Panc1 (cell line): ENCODE measurements at regions of chr9 and their contacts with region 1.

Region 1: GRCh38 chr9:131046581-131047202 is 37.7 kb downstream of the LAMC3 start:
- DNase-seq: no peak
- ATAC-seq: peak; percentile 91
- H3K4me3 ChIP-seq: no peak overlapping the region
- H3K27ac ChIP-seq: no peak overlapping the region
- H3K4me1 ChIP-seq: no peaks in the 10 kb centered on the region
- H3K27me3 ChIP-seq: no peaks in the 10 kb centered on the region
- CTCF ChIP-seq: peak; percentile 92

Region 2: DNA sequence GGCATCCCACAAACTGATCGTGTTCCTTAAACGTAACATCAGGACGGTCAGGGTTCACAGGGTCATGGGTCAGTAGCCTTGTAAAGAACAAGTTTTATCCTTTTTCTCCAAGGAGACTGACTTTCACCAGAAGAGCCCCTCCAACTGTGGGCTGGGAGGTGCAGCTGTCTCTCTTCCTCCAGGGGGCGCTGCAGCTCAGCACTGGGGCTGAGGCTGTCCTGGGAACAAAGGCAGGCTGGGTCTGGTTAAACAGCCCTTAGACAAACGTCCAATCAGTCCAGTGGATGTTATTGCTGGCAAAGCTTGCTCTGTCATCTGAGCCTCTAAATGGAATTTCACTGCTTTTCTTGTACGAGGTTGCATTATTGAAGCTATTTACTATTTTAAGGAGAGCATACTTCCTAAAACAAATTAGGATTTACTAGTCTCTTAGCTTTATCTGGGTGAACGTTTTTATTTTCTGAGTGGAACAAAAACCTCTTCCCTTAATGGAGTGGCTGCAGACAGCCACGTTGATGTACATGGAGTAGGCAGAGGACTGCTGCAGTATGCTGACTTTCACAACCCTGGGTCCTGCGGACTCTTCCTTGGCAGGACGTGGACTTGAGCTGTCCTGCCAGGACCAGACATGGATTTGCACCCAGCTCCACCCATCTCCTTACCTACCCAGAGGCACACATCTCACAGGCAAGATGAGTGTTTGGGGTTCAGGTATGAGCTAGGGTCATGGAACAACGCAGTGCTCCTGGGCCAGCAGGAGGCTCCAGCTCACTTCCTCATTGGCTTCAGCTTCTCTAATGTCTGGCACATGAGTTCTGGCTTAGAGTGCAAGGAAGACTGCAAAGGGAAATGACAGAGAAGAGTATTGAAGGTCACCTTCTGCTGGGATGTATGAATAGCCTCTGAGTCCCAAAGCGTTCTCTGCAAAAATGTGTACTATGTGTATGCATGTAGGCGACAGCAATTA is 345.4 kb before region 1 on chr9:
- CTCF ChIA-PET with region 1: no interaction called
- POLR2A ChIA-PET with region 1: interaction called, 16 read pairs
- in situ Hi-C with region 1: no loop called
- intact Hi-C with region 1: no loop called
- DNase-seq: no peak
- ATAC-seq: peak; percentile 93
- H3K4me3 ChIP-seq: no peak overlapping the region
- H3K27ac ChIP-seq: no peak overlapping the region
- H3K4me1 ChIP-seq: no peaks in the 10 kb centered on the region; the same call in 1 of the 2 replicates
- H3K27me3 ChIP-seq: no peaks in the 10 kb centered on the region
- CTCF ChIP-seq: peak; percentile 91

Region 3: DNA sequence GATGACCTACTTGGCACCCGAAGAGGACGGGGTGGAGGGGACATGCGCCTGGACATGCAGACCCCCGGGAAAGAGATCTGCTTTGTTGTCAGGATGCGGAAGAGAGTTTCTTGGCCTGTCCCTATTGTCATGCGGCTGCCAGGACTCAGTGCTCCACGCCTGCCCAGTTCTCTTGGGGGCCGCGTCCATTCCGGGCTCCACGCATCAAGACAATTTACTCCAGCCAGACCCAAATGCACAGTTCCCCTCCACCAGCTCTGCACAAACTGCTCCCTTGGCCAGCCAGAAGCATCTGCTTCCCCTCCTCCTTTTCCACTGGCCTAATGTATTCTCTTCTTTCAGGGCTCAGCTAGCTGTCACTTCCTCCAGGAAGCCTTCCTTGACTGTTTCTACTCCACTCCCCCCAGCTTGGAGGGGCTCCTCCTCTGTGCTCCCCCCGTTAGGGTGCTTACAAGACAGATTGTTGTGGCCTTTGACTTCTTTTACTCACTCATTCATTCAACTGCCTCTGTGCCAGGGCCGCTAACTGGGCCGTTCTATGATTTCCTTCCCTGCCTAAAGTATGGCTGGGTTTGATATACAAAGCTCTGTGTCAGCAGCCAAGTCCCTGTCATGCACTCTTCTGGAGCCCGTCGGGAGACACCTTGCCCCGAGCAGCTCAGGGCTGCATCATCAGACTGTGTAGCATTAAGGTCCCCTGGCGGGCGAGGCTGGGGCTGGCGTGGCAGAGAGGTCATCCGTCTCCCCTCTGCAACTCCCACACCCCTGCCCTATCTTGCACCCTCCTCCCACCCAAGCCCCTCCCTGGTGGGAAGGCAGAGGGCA is 114.2 kb before region 1 on chr9:
- CTCF ChIA-PET with region 1: no interaction called
- POLR2A ChIA-PET with region 1: interaction called, 13 read pairs
- in situ Hi-C with region 1: no loop called
- intact Hi-C with region 1: no loop called
- DNase-seq: no peak
- ATAC-seq: peak; percentile 36; the same call in 1 of the 2 replicates
- H3K4me3 ChIP-seq: no peak overlapping the region
- H3K27ac ChIP-seq: no peak overlapping the region
- H3K4me1 ChIP-seq: peaks cover 36% of the 10 kb centered on the region
- H3K27me3 ChIP-seq: no peaks in the 10 kb centered on the region
- CTCF ChIP-seq: no peak

Region 4: GRCh38 chr9:130973169-130973936 is 73.3 kb before region 1 on chr9:
- CTCF ChIA-PET with region 1: interaction called, 22 read pairs
- POLR2A ChIA-PET with region 1: no interaction called
- in situ Hi-C with region 1: no loop called
- intact Hi-C with region 1: no loop called
- DNase-seq: no peak
- ATAC-seq: peak; percentile 42
- H3K4me3 ChIP-seq: no peak overlapping the region
- H3K27ac ChIP-seq: no peak overlapping the region
- H3K4me1 ChIP-seq: no peaks in the 10 kb centered on the region
- H3K27me3 ChIP-seq: no peaks in the 10 kb centered on the region
- CTCF ChIP-seq: no peak

Region 5: DNA sequence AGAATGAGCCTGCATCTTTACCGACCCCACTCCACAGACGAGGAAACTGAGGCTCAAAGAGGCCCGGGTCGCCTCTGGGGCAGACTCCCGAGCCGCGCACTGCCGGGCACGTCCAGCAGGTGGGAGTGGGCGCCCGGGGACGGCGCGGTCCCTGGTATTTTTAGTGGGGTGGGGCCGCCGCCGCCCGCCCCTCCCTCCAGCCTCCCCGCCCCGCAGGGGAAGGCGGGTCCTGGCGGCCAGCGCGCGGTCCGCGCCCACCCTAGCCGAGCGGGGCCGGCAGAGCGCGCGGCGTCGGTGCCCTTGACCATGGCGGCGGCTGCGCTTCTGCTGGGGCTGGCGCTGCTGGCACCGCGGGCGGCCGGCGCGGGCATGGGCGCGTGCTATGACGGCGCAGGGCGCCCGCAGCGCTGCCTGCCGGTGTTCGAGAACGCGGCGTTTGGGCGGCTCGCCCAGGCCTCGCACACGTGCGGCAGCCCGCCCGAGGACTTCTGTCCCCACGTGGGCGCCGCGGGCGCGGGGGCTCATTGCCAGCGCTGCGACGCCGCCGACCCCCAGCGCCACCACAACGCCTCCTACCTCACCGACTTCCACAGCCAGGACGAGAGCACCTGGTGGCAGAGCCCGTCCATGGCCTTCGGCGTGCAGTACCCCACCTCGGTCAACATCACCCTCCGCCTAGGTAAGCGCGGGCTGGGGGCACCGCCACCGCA is 37.6 kb before region 1 on chr9 and contains the start of gene LAMC3:
- CTCF ChIA-PET with region 1: interaction called, 8 read pairs
- POLR2A ChIA-PET with region 1: no interaction called
- in situ Hi-C with region 1: no loop called
- intact Hi-C with region 1: loop called (anchors 1 kb)
- DNase-seq: no peak
- ATAC-seq: peak; percentile 92
- H3K4me3 ChIP-seq: peak within 1 kb of the TSS; percentile 46 to 56
- H3K27ac ChIP-seq: no peak within 1 kb of the TSS
- H3K4me1 ChIP-seq: no peaks in the 10 kb centered on the region
- H3K27me3 ChIP-seq: no peaks in the 10 kb centered on the region
- CTCF ChIP-seq: peak; percentile 78
- total RNA-seq, gene LAMC3: 16.4 TPM

Region 6: GRCh38 chr9:131082774-131083512 is 36.3 kb after region 1 on chr9:
- CTCF ChIA-PET with region 1: no interaction called
- POLR2A ChIA-PET with region 1: no interaction called
- in situ Hi-C with region 1: no loop called
- intact Hi-C with region 1: no loop called
- DNase-seq: no peak
- ATAC-seq: no peak
- H3K4me3 ChIP-seq: no peak overlapping the region
- H3K27ac ChIP-seq: no peak overlapping the region
- H3K4me1 ChIP-seq: peaks cover 4% of the 10 kb centered on the region
- H3K27me3 ChIP-seq: no peaks in the 10 kb centered on the region
- CTCF ChIP-seq: no peak

Region 7: GRCh38 chr9:131385296-131385695 is 338.6 kb after region 1 on chr9:
- CTCF ChIA-PET with region 1: interaction called, 10 read pairs
- POLR2A ChIA-PET with region 1: no interaction called
- in situ Hi-C with region 1: no loop called
- intact Hi-C with region 1: no loop called
- DNase-seq: no peak
- ATAC-seq: no peak
- H3K4me3 ChIP-seq: no peak overlapping the region
- H3K27ac ChIP-seq: no peak overlapping the region
- H3K4me1 ChIP-seq: peaks cover 17% of the 10 kb centered on the region
- H3K27me3 ChIP-seq: no peaks in the 10 kb centered on the region
- CTCF ChIP-seq: no peak